Activated CD8-positive, alpha-beta T cell treated with anti-CD3 and anti-CD28 coated beads, Interleukin-2, amount 10 ng/mL, durations not matched to agents 7 days and 5 days (primary cell): ENCODE measurements at regions of chr14 and their contacts with region 1.

Region 1: GRCh38 chr14:64823305-64823861 is 56.3 kb downstream of the SPTB start:
- DNase-seq: peak; percentile 73
- ATAC-seq: peak; percentile 95
- H3K4me3 Mint-ChIP-seq: no peak overlapping the region
- H3K27ac Mint-ChIP-seq: no peak overlapping the region
- H3K4me1 Mint-ChIP-seq: peaks cover 4% of the 10 kb centered on the region
- H3K27me3 Mint-ChIP-seq: peaks cover 43% of the 10 kb centered on the region

Region 2: DNA sequence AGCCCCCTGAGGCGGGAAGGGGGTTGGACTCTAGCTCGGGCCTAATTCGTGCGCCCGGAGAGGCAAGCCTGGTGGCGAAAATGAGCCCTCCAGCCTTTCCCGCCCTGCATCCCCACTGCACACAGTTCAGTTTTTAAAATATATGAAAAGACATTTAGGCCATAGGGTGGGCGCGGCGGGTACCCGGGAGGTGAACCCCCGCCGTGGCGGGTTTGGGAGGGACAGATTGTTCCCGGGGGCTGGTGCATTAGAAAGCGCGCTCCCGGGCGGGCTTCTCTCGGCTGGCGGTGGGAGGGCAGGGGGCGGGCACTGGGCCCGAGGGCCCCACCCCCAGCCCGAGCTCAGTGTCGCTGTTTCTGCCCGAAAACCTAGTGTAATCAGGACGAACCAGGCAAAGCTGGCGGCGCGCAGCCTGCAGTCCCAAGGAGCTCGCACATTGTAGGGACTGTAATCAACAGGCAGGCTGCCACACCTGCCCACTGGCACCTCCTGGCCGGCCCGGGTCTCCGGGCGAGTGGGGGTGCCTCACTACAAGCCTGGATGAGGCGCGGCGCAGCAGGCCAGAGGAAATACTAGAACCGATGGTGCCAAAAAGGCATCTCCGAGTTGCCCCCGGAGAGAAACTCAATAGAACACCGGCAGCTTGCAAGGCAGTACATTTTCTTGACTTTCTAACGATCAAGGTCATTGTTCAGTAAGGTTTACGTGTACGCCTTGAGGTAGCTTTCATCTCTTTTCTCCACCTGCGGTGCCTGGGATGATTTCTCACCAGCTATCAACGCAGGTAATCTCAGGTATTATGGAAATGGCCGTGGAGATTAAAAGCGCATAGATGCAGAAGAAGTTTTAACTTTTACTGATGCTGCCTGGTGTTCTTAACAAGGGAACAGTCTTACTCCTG is 57.1 kb after region 1 on chr14:
- CTCF ChIA-PET with region 1: interaction called, 12 read pairs
- POLR2A ChIA-PET with region 1: interaction called, 3 read pairs
- DNase-seq: peak; percentile 68
- ATAC-seq: peak; percentile 91
- H3K4me3 Mint-ChIP-seq: peak overlapping the region; percentile 75
- H3K27ac Mint-ChIP-seq: no peak overlapping the region
- H3K4me1 Mint-ChIP-seq: peaks cover 11% of the 10 kb centered on the region
- H3K27me3 Mint-ChIP-seq: peaks cover 61% of the 10 kb centered on the region

Region 3: DNA sequence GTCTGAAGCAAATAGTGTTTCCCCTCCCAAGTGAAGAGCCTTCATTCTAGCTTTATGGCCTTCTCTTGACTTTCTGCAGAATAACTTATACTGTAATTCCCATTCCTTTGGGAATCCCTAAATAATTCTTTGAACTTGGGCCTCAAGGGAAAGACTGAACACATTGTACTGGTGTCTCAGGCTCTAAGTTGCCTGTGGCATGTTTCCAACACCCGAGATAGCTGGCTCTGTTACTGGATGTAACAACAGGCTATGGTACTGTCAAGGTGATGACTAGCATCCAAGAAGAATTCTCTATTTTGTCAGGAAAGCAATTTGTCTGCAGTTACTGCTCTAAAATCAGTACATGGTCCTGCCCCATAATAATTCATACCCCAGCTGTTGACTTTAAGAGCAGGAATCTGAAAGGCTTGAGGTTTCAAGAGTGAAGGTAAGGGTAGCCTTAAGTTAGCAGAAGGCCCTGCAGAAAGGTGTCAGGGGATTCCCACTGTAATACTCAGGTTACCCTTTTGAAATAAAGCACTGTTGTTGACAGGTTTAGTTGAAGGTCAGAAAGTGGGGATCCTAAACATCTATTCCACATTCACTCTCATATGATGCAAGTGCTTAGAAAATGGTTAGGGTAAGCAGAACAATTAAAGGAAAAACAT is 113.9 kb after region 1 on chr14:
- CTCF ChIA-PET with region 1: interaction called, 10 read pairs
- POLR2A ChIA-PET with region 1: no interaction called
- DNase-seq: no peak
- ATAC-seq: no peak
- H3K4me3 Mint-ChIP-seq: no peak overlapping the region
- H3K27ac Mint-ChIP-seq: no peak overlapping the region
- H3K4me1 Mint-ChIP-seq: peaks cover 26% of the 10 kb centered on the region
- H3K27me3 Mint-ChIP-seq: no peaks in the 10 kb centered on the region